ENCODE measurements at regions of chr11 and their contacts with region 1.

Region 1: GRCh38 chr11:109564241-109564640 is 142.3 kb downstream of the C11orf87 start:
- DNase-seq: no peak
- ATAC-seq: no peak
- H3K4me3 ChIP-seq: no peak overlapping the region
- H3K27ac ChIP-seq: no peak overlapping the region
- H3K4me1 ChIP-seq: no peaks in the 10 kb centered on the region
- H3K27me3 ChIP-seq: no peaks in the 10 kb centered on the region
- CTCF ChIP-seq: no peak
- POLR2A ChIP-seq: no peak
- RAD21 ChIP-seq: no peak

Region 2: GRCh38 chr11:109037856-109038780 is 526.1 kb before region 1 on chr11:
- CTCF ChIA-PET with region 1: no interaction called
- POLR2A ChIA-PET with region 1: no interaction called
- dilution Hi-C with region 1: no loop called
- in situ Hi-C with region 1: no loop called
- intact Hi-C with region 1: no loop called
- DNase-seq: peak; percentile 61
- ATAC-seq: peak; percentile 76
- H3K4me3 ChIP-seq: no peak overlapping the region
- H3K27ac ChIP-seq: no peak overlapping the region
- H3K4me1 ChIP-seq: no peaks in the 10 kb centered on the region; the same call in 1 of the 2 replicates
- H3K27me3 ChIP-seq: no peaks in the 10 kb centered on the region
- CTCF ChIP-seq: no peak
- POLR2A ChIP-seq: no peak
- RAD21 ChIP-seq: no peak

Region 3: GRCh38 chr11:109285465-109285864 is 278.8 kb before region 1 on chr11:
- CTCF ChIA-PET with region 1: no interaction called
- POLR2A ChIA-PET with region 1: no interaction called
- dilution Hi-C with region 1: no loop called
- in situ Hi-C with region 1: no loop called
- intact Hi-C with region 1: no loop called
- DNase-seq: no peak
- ATAC-seq: no peak
- H3K4me3 ChIP-seq: no peak overlapping the region
- H3K27ac ChIP-seq: no peak overlapping the region
- H3K4me1 ChIP-seq: no peaks in the 10 kb centered on the region
- H3K27me3 ChIP-seq: no peaks in the 10 kb centered on the region
- CTCF ChIP-seq: no peak
- POLR2A ChIP-seq: no peak
- RAD21 ChIP-seq: no peak

Region 4: GRCh38 chr11:109619498-109619897 is 55.3 kb after region 1 on chr11:
- CTCF ChIA-PET with region 1: no interaction called
- POLR2A ChIA-PET with region 1: no interaction called
- dilution Hi-C with region 1: no loop called
- in situ Hi-C with region 1: no loop called
- intact Hi-C with region 1: no loop called
- DNase-seq: no peak
- ATAC-seq: no peak
- H3K4me3 ChIP-seq: no peak overlapping the region
- H3K27ac ChIP-seq: no peak overlapping the region
- H3K4me1 ChIP-seq: no peaks in the 10 kb centered on the region
- H3K27me3 ChIP-seq: no peaks in the 10 kb centered on the region; the same call in 1 of the 2 replicates
- CTCF ChIP-seq: no peak
- POLR2A ChIP-seq: no peak
- RAD21 ChIP-seq: no peak

Region 5: DNA sequence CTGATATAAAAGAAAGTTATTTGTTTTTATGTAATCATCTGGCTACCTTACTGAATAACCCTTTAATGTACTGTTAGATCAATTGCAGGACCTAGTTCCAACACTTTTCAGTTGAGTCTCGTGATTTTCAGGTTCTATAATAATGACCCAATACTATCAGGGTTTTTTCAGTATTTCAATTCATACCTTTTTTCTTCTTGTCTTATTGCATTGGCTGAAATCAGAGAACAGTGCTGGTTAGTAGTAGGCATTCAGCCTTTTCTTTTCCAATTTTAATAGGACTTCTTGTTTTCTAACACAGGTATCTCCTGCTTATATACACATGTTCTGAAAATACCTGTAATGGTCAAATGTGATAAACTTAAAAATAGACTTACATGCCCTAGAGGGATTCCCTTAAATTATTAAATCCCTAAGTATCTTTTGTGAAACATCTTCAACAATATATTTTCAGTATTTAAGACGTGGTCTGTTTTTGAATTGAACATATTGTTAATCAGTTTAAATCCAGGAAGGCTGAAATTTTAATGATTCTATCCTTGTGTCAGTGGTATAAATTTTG is 542.6 kb after region 1 on chr11:
- CTCF ChIA-PET with region 1: no interaction called
- POLR2A ChIA-PET with region 1: no interaction called
- dilution Hi-C with region 1: no loop called
- in situ Hi-C with region 1: no loop called
- intact Hi-C with region 1: loop called (anchors 5 kb)
- DNase-seq: no peak
- ATAC-seq: no peak
- H3K4me3 ChIP-seq: no peak overlapping the region
- H3K27ac ChIP-seq: no peak overlapping the region
- H3K4me1 ChIP-seq: no peaks in the 10 kb centered on the region
- H3K27me3 ChIP-seq: no peaks in the 10 kb centered on the region
- CTCF ChIP-seq: no peak
- POLR2A ChIP-seq: no peak
- RAD21 ChIP-seq: no peak

Measured in IMR-90 (cell line).